Ovary (tissue), 10 donors: ENCODE measurements at regions of chr19 and their contacts with region 1.

Region 1: GRCh38 chr19:42244347-42245220 is 2.2 kb upstream of the GSK3A start:
- DNase-seq: peak; percentile 85 to 93 (median 90)
- H3K4me3 ChIP-seq: peak overlapping the region; percentile 49
- H3K27ac ChIP-seq: peak overlapping the region; percentile 56 to 75
- H3K4me1 ChIP-seq: peaks cover 15% of the 10 kb centered on the region
- H3K27me3 ChIP-seq: no peaks in the 10 kb centered on the region
- CTCF ChIP-seq: peak; percentile 69 to 80 (median 73)
- EP300 ChIP-seq: peak; percentile 41
- POLR2A ChIP-seq: peak; percentile 50

Region 2: DNA sequence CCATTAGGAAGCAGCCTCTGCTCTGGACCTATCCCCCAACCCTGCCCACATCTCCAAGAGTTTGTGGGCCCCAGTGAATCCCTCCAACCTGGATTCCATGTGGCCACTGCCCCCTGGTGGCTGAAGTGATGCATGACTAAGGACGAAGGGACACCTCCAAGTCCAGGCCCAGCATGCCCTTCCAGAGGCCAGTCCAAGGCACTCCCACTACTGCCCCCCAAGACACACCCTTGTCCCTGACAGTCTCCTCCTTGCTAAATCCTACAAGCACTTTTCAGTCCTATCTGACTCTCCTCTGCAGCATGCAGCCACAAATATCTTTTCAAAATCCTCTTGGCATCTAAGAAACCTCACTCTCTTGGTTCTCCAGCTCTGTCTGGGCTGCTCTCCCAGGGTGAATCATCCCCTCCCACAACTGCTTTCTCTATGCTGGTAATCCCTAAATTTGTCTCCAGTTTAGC is 60.2 kb before region 1 on chr19:
- intact Hi-C with region 1: no loop called
- DNase-seq: peak; percentile 55 to 72 (median 66)
- H3K4me3 ChIP-seq: no peak overlapping the region
- H3K27ac ChIP-seq: no peak overlapping the region
- H3K4me1 ChIP-seq: no peaks in the 10 kb centered on the region
- H3K27me3 ChIP-seq: no peaks in the 10 kb centered on the region
- CTCF ChIP-seq: peak; percentile 56 to 76 (median 62)
- EP300 ChIP-seq: no peak
- POLR2A ChIP-seq: no peak

Region 3: DNA sequence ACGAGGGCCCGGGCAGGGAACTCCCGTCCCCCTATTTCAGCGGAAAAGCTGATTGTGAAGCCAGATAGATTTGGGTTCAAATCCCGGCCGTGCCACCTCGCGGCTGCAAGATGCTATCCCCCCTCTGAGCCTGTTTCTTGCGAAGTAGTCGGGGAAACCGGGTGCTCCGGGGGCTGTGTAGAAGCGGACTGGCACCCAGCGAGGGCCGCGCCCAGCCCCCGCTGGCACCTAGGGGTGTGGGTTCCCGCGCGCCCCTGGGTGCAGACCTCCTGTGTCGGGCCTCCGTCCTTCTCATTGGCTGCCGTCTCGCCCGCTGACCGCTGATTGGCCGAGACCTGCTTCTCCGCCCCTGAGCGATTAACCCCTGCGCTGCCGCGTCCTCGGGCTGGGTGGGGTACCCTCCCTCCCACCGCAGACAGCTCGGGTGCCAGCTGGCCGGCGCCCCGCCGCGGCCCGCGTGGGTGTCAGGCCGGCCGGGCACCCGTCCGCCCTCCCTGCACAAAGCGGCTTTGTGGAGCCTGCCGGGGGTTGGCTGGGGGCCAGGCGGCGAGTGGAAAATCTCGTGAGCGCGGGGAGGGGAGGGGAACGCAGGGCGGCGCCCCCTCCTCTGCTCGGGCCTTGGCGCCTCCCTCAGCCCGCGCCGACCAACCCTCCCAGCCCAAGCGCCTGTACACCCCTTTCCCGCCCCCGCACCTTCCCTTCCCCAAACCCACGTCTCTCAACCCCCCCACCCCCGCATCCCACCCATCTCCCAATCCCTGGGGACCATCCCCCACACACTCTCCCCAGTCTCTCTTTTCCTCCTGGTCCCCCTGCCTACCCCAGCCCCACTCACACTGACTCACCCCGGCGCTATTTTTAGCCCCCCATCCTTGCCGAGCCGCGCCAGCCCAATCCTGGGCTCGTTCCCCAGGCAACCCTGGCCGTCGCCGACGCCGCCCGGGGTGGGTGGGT is 35.9 kb after region 1 on chr19:
- intact Hi-C with region 1: loop called in 3 of 4 experiments (anchors 2 to 5 kb)
- DNase-seq: peak; percentile 95 to 97 (median 96)
- H3K4me3 ChIP-seq: peak overlapping the region; percentile 91
- H3K27ac ChIP-seq: peak overlapping the region; percentile 83 to 98
- H3K4me1 ChIP-seq: peaks cover 24% of the 10 kb centered on the region
- H3K27me3 ChIP-seq: no peaks in the 10 kb centered on the region
- CTCF ChIP-seq: no peak
- EP300 ChIP-seq: no peak
- POLR2A ChIP-seq: peak; percentile 55

Region 4: DNA sequence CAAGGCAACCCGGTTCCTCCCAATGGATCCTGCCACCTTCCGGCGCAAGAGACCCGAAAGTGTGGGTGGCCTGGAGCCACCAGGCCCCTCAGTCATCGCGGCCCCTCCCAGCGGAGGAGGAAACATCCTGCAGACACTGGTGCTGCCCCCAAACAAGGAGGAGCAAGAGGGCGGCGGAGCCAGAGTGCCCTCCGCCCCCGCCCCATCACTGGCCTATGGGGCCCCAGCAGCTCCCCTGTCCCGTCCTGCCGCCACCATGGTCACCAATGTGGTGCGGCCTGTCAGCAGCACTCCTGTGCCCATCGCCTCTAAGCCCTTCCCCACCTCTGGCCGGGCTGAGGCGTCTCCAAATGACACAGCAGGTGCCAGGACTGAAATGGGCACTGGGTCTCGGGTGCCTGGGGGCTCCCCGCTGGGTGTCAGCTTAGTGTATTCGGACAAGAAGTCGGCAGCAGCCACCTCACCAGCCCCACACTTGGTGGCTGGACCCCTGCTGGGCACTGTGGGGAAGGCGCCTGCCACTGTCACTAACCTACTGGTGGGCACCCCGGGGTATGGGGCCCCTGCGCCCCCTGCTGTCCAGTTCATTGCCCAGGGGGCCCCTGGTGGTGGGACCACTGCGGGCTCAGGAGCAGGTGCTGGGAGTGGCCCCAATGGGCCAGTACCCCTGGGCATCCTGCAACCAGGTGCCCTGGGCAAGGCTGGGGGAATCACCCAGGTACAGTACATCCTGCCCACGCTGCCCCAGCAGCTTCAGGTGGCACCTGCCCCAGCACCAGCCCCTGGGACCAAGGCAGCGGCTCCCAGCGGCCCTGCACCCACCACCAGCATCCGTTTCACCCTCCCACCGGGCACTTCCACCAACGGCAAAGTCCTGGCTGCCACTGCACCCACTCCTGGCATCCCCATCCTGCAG is 46.2 kb after region 1 on chr19:
- intact Hi-C with region 1: loop called in 3 of 4 experiments (anchors 5 kb)
- DNase-seq: peak in 2 of 5 donors; percentile 47 to 51
- H3K4me3 ChIP-seq: no peak overlapping the region
- H3K27ac ChIP-seq: no peak overlapping the region
- H3K4me1 ChIP-seq: peaks cover 8% of the 10 kb centered on the region
- H3K27me3 ChIP-seq: no peaks in the 10 kb centered on the region
- CTCF ChIP-seq: peak in 1 of 3 donors; percentile 31
- EP300 ChIP-seq: no peak
- POLR2A ChIP-seq: no peak

Region 5: DNA sequence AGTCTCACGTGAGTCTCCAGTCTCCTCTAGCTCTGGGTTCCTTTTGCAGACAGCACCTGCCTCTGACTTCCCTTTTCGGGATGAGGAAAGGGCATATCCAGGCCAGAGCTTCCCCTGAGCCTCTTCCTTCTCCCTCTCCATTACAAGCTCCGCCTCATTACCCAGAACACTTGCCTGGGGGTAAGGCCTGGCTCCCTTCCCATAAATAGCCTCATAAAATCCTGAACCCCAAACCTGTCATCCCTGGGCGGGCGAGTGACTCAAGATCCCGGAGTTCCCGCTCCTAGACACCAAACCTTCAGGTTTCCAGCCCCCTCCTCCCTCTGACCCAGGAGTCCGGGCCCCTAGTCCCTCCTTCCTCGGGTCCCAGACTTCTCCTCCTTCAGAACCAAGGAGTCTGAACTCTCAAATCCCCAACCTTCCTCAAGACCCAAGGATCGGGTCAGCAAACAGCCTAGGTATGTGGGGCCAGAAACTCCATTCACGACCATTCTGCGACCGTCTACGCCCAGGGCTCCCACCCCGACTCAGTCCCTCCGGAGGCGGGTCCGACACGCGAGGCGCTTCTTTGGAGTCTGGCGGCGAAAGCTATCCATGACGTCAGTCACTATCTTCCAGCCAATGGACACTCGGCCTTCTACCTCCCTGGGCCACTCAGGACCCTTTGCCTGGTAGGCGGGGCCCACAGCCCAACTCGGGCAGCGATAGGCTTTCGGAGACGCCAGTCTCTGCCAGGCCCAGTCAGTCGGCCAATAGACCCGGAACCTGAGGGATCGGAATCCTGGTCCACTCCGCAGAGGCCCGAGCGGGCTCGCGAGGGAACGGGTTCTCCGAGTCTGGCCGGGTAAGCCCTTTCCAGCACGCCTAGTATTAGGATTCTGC is 152.0 kb after region 1 on chr19:
- intact Hi-C with region 1: loop called in 1 of 4 experiments (anchors 10 kb)
- DNase-seq: peak; percentile 96 to 100 (median 99)
- H3K4me3 ChIP-seq: peak overlapping the region; percentile 41
- H3K27ac ChIP-seq: peak overlapping the region in 1 of 2 donors; percentile 58
- H3K4me1 ChIP-seq: peaks cover 9% of the 10 kb centered on the region
- H3K27me3 ChIP-seq: no peaks in the 10 kb centered on the region
- CTCF ChIP-seq: no peak
- EP300 ChIP-seq: no peak
- POLR2A ChIP-seq: peak; percentile 54

Region 6: DNA sequence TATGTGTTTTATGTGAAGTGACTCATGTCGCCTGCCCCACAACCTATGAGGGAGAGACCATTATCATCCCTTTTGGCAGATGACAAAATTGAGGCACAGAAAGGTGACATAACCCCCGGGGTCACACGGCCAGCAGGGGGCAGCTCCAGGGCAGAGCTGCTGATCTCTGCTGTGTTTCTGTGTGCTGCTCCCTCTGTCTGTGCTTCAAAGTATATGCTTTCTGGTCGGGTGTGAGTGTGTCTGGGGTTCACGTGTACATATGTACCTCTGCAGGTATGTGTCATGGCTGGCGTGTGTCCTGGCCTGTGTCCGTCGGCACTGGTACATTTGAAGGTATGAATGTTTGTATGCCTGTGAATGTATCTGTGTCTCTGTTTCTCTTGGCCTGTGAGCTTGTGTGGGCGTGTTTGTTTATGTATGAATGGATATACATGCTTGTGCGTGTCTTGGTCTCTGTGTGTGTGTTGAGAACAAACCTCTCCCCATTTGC is 175.5 kb after region 1 on chr19:
- intact Hi-C with region 1: no loop called
- DNase-seq: peak in 1 of 5 donors; percentile 23
- H3K4me3 ChIP-seq: no peak overlapping the region
- H3K27ac ChIP-seq: no peak overlapping the region
- H3K4me1 ChIP-seq: peaks cover 7% of the 10 kb centered on the region
- H3K27me3 ChIP-seq: no peaks in the 10 kb centered on the region
- CTCF ChIP-seq: no peak
- EP300 ChIP-seq: no peak
- POLR2A ChIP-seq: no peak